ENCODE measurements at regions of chr12 and their contacts with region 1.

Region 1: GRCh38 chr12:56359851-56360767 is at the start of gene STAT2:
- DNase-seq: peak; percentile 99
- ATAC-seq: peak; percentile 98
- H3K4me3 ChIP-seq: peak within 1 kb of the TSS; percentile 93
- H3K27ac ChIP-seq: peak within 1 kb of the TSS; percentile 89
- H3K4me1 ChIP-seq: peaks cover 5% of the 10 kb centered on the region; the same call in 1 of the 2 replicates
- H3K27me3 ChIP-seq: no peaks in the 10 kb centered on the region
- CTCF ChIP-seq: no peak
- EP300 ChIP-seq: no peak
- POLR2A ChIP-seq: peak; percentile 90
- RAD21 ChIP-seq: no peak
- polyA plus RNA-seq, gene STAT2: 16.9 to 23.5 TPM

Region 2: GRCh38 chr12:56243731-56244181 is 116.4 kb before region 1 on chr12:
- CTCF ChIA-PET with region 1: no interaction called
- POLR2A ChIA-PET with region 1: no interaction called
- RAD21 ChIA-PET with region 1: no interaction called
- SMC1A ChIA-PET with region 1: no interaction called
- in situ Hi-C with region 1: no loop called
- intact Hi-C with region 1: no loop called
- DNase-seq: no peak
- ATAC-seq: no peak
- H3K4me3 ChIP-seq: no peak overlapping the region
- H3K27ac ChIP-seq: no peak overlapping the region
- H3K4me1 ChIP-seq: no peaks in the 10 kb centered on the region
- H3K27me3 ChIP-seq: no peaks in the 10 kb centered on the region
- CTCF ChIP-seq: no peak
- EP300 ChIP-seq: no peak
- POLR2A ChIP-seq: no peak
- RAD21 ChIP-seq: no peak

Region 3: GRCh38 chr12:56315622-56316473 is 44.3 kb before region 1 on chr12 and contains the start of gene CNPY2:
- CTCF ChIA-PET with region 1: interaction called, 16 read pairs
- POLR2A ChIA-PET with region 1: interaction called, 26 read pairs
- RAD21 ChIA-PET with region 1: interaction called, 34 read pairs
- SMC1A ChIA-PET with region 1: interaction called, 25 read pairs
- in situ Hi-C with region 1: no loop called
- intact Hi-C with region 1: loop called (anchors 1 kb)
- DNase-seq: peak; percentile 97
- ATAC-seq: peak; percentile 95
- H3K4me3 ChIP-seq: peak within 1 kb of the TSS; percentile 97
- H3K27ac ChIP-seq: peak within 1 kb of the TSS; percentile 92
- H3K4me1 ChIP-seq: peaks cover 3% of the 10 kb centered on the region
- H3K27me3 ChIP-seq: no peaks in the 10 kb centered on the region
- CTCF ChIP-seq: peak in 1 of 3 experiments; percentile 50; a peak in 2 of 6 replicates
- EP300 ChIP-seq: no peak
- POLR2A ChIP-seq: peak; percentile 97
- RAD21 ChIP-seq: peak; percentile 55
- polyA plus RNA-seq, gene CNPY2: 25.0 to 50.3 TPM

Region 4: DNA sequence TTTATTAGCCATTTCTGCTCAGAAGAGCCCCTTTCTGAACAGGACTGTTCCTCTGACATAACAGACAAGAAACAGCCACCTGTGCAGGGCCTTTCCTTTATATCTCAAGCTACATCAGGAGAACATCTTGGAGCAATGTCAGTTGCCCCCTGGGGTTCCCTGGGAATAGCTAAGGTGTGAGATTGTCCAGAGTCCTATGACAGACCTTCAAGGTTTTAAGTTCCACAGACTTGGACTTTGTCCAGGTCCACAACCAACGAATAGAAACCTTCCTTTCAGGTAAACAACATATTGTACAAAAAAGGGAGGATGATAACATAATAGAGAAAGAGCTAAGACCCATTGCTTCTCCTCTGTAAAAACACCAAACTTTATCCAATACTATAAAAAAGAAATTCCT is 18.5 kb before region 1 on chr12:
- CTCF ChIA-PET with region 1: interaction called, 21 read pairs
- POLR2A ChIA-PET with region 1: interaction called, 140 read pairs
- RAD21 ChIA-PET with region 1: interaction called, 47 read pairs
- SMC1A ChIA-PET with region 1: interaction called, 28 read pairs
- in situ Hi-C with region 1: no loop called
- intact Hi-C with region 1: no loop called
- DNase-seq: no peak
- ATAC-seq: no peak
- H3K4me3 ChIP-seq: no peak overlapping the region
- H3K27ac ChIP-seq: no peak overlapping the region
- H3K4me1 ChIP-seq: peaks cover 18% of the 10 kb centered on the region
- H3K27me3 ChIP-seq: no peaks in the 10 kb centered on the region
- CTCF ChIP-seq: no peak
- EP300 ChIP-seq: no peak
- POLR2A ChIP-seq: no peak
- RAD21 ChIP-seq: no peak

Region 5: GRCh38 chr12:56377310-56377988 is 17.3 kb after region 1 on chr12:
- CTCF ChIA-PET with region 1: interaction called, 17 read pairs
- POLR2A ChIA-PET with region 1: interaction called, 54 read pairs
- RAD21 ChIA-PET with region 1: interaction called, 60 read pairs
- SMC1A ChIA-PET with region 1: interaction called, 58 read pairs
- in situ Hi-C with region 1: no loop called
- intact Hi-C with region 1: no loop called
- DNase-seq: no peak
- ATAC-seq: no peak
- H3K4me3 ChIP-seq: no peak overlapping the region
- H3K27ac ChIP-seq: peak overlapping the region; percentile 25; the same call in 1 of the 2 replicates
- H3K4me1 ChIP-seq: peaks cover 36% of the 10 kb centered on the region
- H3K27me3 ChIP-seq: no peaks in the 10 kb centered on the region
- CTCF ChIP-seq: peak in 1 of 3 experiments; percentile 10; a peak in 1 of 6 replicates
- EP300 ChIP-seq: no peak
- POLR2A ChIP-seq: no peak
- RAD21 ChIP-seq: peak; percentile 46

Region 6: GRCh38 chr12:56461235-56462159 is 101.4 kb after region 1 on chr12:
- CTCF ChIA-PET with region 1: interaction called, 31 read pairs
- POLR2A ChIA-PET with region 1: interaction called, 16 read pairs
- RAD21 ChIA-PET with region 1: interaction called, 41 read pairs
- SMC1A ChIA-PET with region 1: interaction called, 42 read pairs
- in situ Hi-C with region 1: no loop called
- intact Hi-C with region 1: no loop called
- DNase-seq: no peak
- ATAC-seq: no peak; the same call in 2 of the 3 replicates
- H3K4me3 ChIP-seq: no peak overlapping the region
- H3K27ac ChIP-seq: no peak overlapping the region
- H3K4me1 ChIP-seq: peaks cover 10% of the 10 kb centered on the region
- H3K27me3 ChIP-seq: no peaks in the 10 kb centered on the region
- CTCF ChIP-seq: no peak
- EP300 ChIP-seq: no peak
- POLR2A ChIP-seq: no peak
- RAD21 ChIP-seq: no peak